Posterior cingulate gyrus (tissue), 11 donors: ENCODE measurements at regions of chr7 and their contacts with region 1.

Region 1: GRCh38 chr7:24665564-24666294 is 91.5 kb downstream of the GSDME start:
- DNase-seq: peak in 2 of 10 donors; percentile 29 to 44

Region 2: DNA sequence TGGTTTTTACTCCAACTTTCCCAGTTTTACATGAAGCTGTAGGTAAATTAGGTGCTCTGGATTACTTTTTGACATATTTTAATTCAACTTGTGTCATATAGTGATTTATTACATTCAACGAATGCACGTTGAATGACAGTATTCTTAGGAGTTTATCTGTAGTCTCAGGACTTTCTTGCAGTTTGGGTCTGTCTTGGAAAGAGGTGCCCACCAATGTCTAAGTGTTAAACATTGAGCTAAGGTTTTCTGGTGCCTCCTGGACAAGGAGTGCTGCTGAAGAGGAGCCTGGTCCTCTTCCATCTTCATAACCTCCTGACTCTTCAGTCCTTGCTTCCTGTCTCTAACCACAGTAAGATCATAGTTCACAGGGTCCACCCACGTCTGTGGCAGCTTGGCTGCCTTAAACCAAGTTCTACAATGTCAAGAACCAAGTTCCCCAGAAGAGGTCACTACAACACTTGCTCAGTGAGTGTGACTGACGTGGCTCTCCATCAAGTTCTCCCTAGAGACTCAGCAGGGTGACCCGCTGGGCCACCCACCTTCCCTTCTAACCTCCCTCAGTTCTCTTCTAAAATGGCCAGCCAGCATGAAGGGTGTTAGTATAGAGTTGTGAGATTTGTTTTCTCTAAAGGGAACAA is 375.6 kb before region 1 on chr7:
- intact Hi-C with region 1: loop called (anchors 2 kb)
- DNase-seq: peak in 1 of 10 donors; percentile 49

Region 3: DNA sequence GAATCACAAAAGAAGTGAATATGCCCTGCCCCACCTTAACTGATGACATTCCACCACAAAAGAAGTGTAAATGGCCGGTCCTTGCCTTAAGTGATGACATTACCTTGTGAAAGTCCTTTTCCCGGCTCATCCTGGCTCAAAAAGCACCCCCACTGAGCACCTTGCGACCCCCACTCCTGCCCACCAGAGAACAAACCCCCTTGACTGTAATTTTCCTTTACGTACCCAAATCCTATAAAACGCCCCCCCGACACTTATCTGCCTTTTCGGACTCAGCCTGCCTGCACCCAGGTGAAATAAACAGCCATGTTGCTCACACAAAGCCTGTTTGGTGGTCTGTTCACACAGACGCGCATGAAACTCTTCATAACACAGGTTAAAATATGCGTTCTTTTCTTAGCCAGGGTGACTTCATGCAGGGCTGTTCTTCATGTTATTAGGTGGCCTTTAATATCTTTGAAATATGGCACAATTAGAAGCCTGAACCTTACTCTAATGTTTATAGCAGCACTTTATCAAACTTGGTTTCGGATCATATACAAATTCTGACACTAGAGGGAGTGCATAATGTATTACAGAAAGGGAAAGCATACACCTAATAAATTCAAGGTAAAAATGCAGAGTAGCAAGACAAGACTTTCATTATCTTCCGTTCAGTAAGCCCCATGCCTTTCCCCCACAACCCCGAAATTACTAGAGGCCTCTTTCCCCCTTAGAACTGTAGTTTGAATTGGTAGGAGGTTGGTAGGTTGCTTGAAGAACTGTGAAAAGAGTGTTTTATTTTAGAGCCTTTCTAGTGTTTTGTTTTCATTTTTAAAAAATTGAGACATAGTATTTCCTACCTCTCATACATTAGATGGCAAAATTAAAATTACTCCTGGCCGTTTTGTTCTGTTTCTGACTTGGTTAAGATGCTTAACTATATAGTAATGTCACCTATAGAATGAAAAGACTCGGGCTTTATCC is 263.8 kb before region 1 on chr7:
- intact Hi-C with region 1: loop called (anchors 10 kb)
- DNase-seq: no peak

Region 4: GRCh38 chr7:24572997-24573625 is 92.6 kb before region 1 on chr7 and contains the start of gene PALS2:
- intact Hi-C with region 1: loop called (anchors 2 kb)
- DNase-seq: peak; percentile 48 to 95 (median 62)

Region 5: DNA sequence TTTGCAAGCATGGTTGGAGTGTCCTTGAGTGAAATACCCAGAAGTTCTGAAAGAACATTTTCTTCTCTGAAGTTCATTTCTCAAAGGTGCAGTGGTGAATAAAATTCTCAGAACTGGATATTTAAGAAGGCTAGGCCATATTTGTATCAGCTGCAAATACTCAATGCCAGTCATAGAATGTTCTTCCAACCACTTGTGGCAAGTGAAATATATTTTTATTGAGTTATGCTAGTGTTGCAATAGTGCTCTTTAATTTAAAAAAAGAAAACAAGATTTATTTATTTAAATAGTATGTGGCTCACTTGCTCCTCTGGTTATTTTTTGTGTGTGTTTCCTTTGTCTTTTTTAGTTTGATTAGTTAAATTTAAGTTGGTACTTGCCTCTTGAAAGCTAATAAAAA is 28.0 kb before region 1 on chr7:
- intact Hi-C with region 1: no loop called
- DNase-seq: no peak

Region 6: GRCh38 chr7:24836084-24836483 is 170.4 kb after region 1 on chr7:
- intact Hi-C with region 1: no loop called
- DNase-seq: no peak